Activated CD4-positive, alpha-beta T cell treated with anti-CD3 and anti-CD28 coated beads for 36 hours (primary cell): ENCODE measurements at regions of chr5 and their contacts with region 1.

Region 1: GRCh38 chr5:134493461-134494055 is 31.9 kb upstream of the JADE2 start:
- DNase-seq: no peak
- ATAC-seq: no peak
- H3K4me3 Mint-ChIP-seq: no peak overlapping the region
- H3K27ac Mint-ChIP-seq: no peak overlapping the region
- H3K4me1 Mint-ChIP-seq: no peaks in the 10 kb centered on the region
- H3K27me3 Mint-ChIP-seq: no peaks in the 10 kb centered on the region

Region 2: GRCh38 chr5:134204575-134204974 is 289.0 kb before region 1 on chr5:
- CTCF ChIA-PET with region 1: no interaction called
- POLR2A ChIA-PET with region 1: no interaction called
- intact Hi-C with region 1: no loop called
- DNase-seq: no peak
- ATAC-seq: no peak
- H3K4me3 Mint-ChIP-seq: no peak overlapping the region
- H3K27ac Mint-ChIP-seq: no peak overlapping the region
- H3K4me1 Mint-ChIP-seq: peaks cover 21% of the 10 kb centered on the region
- H3K27me3 Mint-ChIP-seq: no peaks in the 10 kb centered on the region

Region 3: GRCh38 chr5:134406390-134406789 is 87.2 kb before region 1 on chr5:
- CTCF ChIA-PET with region 1: no interaction called
- POLR2A ChIA-PET with region 1: interaction called, 14 read pairs
- intact Hi-C with region 1: no loop called
- DNase-seq: peak; percentile 27
- ATAC-seq: peak; percentile 69
- H3K4me3 Mint-ChIP-seq: no peak overlapping the region
- H3K27ac Mint-ChIP-seq: peak overlapping the region; percentile 31
- H3K4me1 Mint-ChIP-seq: peaks cover 35% of the 10 kb centered on the region
- H3K27me3 Mint-ChIP-seq: no peaks in the 10 kb centered on the region

Region 4: DNA sequence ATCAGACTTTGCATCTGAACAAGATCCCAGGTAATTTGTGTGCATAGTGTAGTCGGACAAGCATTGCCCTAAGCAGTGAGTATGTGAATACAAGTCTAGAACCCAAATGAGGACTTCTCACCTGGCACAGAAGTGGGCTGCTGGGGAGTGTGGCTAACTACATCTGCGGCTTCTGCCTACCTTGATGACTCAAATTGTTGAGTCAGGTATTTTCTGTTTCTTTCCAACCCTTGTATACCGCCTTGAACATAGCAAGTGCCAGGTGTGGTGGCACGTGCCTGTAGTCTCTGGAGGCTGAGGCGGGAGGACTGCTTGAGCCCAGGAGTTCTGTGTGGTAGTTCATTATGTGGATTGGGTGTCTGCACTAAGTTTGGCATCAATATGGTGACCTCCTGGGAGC is 24.0 kb after region 1 on chr5:
- CTCF ChIA-PET with region 1: no interaction called
- POLR2A ChIA-PET with region 1: no interaction called
- intact Hi-C with region 1: no loop called
- DNase-seq: no peak
- ATAC-seq: no peak
- H3K4me3 Mint-ChIP-seq: no peak overlapping the region
- H3K27ac Mint-ChIP-seq: no peak overlapping the region
- H3K4me1 Mint-ChIP-seq: peaks cover 2% of the 10 kb centered on the region
- H3K27me3 Mint-ChIP-seq: peaks cover 2% of the 10 kb centered on the region